ENCODE measurements at regions of chr3 and their contacts with region 1.

Region 1: DNA sequence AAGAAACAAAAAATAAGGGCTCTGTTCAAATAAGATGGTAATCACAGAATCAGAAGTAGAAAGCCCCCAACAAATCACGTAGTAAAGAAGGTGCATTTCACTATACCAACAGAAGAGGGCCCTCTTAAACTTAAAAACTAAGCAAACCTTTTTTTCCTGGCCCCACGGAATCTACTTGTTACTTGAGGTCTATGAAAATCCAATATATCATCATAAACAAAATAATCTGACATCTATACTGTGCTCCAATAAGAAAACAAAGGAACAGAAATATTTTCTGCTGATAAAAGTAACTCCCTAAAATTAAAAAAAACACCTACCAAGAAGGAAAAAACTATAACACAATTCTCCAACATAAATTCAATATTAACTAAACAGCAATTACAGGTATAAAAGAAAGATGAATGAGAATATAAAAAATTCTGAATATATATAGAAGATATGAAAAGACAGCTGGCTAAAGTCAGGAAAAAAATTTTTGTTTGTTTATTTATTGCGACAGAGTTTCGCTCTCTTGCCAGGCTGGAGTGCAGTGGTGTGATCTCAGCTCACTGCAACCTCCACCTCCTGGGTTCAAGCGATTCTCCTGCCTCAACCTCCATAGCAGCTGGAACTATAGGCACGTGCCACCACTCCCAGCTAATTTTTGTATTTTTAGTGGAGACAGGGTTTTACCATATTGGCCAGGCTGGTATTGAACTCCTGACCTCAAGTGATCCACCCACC is 81.8 kb downstream of the CLASP2 start:
- DNase-seq: no peak
- ATAC-seq: peak; percentile 62
- H3K4me3 ChIP-seq: no peak overlapping the region
- H3K27ac ChIP-seq: no peak overlapping the region
- H3K4me1 ChIP-seq: no peaks in the 10 kb centered on the region
- H3K27me3 ChIP-seq: no peaks in the 10 kb centered on the region
- CTCF ChIP-seq: peak; percentile 42 to 51 (median 50); a peak in 5 of 6 replicates
- EP300 ChIP-seq: no peak
- POLR2A ChIP-seq: no peak
- RAD21 ChIP-seq: peak; percentile 80

Region 2: GRCh38 chr3:32821686-32822296 is 814.5 kb before region 1 on chr3:
- CTCF ChIA-PET with region 1: no interaction called
- POLR2A ChIA-PET with region 1: no interaction called
- RAD21 ChIA-PET with region 1: no interaction called
- SMC1A ChIA-PET with region 1: no interaction called
- in situ Hi-C with region 1: no loop called
- intact Hi-C with region 1: no loop called
- DNase-seq: no peak
- ATAC-seq: no peak
- H3K4me3 ChIP-seq: no peak overlapping the region
- H3K27ac ChIP-seq: no peak overlapping the region
- H3K4me1 ChIP-seq: no peaks in the 10 kb centered on the region
- H3K27me3 ChIP-seq: peaks cover 13 to 19% of the 10 kb centered on the region in 2 experiments
- CTCF ChIP-seq: no peak
- EP300 ChIP-seq: no peak
- POLR2A ChIP-seq: no peak
- RAD21 ChIP-seq: no peak

Region 3: DNA sequence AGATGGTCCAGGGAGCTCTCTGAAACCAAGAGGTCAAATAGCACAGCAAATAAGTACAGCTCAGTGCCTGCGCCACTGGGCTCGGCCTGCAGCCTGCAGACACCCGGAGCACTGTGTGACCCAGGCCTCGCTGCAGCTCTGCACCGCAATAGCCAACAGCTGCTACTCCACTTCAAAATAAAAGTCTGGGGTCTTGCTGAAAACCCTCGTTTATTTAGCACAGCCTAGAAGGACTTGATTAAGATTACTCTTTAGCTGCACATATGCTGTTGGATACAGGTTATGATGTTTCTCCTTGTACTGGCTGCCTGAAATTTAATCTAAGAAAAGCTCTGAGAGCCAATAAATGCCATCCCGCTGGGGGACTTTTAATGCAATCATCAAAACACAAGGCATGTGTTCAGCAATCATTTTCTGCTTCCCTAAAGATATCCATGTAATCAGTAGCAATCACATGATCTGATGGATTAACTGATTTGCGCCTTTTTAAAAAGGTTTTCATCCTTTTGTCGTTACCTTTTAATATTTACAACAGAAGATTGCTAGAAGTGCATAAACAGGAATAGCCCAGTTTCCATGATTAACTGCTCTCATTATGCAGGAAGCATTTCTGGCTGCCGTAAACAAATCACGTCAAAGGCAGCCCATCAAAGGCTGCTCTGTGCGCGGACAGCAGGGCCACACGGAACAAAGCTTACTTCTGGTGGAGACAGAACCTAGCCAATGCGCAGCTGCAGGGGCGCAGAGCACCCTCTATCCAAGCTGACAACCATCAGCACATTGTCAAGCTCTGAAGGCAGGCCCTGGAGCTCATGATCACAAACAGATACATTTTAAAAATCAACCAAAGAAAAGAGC is 22.9 kb after region 1 on chr3:
- CTCF ChIA-PET with region 1: interaction called, 11 read pairs
- POLR2A ChIA-PET with region 1: no interaction called
- RAD21 ChIA-PET with region 1: no interaction called
- SMC1A ChIA-PET with region 1: interaction called, 11 read pairs
- in situ Hi-C with region 1: no loop called
- intact Hi-C with region 1: no loop called
- DNase-seq: peak; percentile 23
- ATAC-seq: peak; percentile 97
- H3K4me3 ChIP-seq: peak overlapping the region; percentile 66
- H3K27ac ChIP-seq: peak overlapping the region; percentile 48
- H3K4me1 ChIP-seq: peaks cover 4% of the 10 kb centered on the region; the same call in 1 of the 2 replicates
- H3K27me3 ChIP-seq: no peaks in the 10 kb centered on the region
- CTCF ChIP-seq: no peak
- EP300 ChIP-seq: no peak
- POLR2A ChIP-seq: peak; percentile 49
- RAD21 ChIP-seq: no peak

Region 4: GRCh38 chr3:33717866-33718594 is 81.7 kb after region 1 on chr3 and contains the start of gene CLASP2:
- CTCF ChIA-PET with region 1: interaction called, 21 read pairs
- POLR2A ChIA-PET with region 1: no interaction called
- RAD21 ChIA-PET with region 1: interaction called, 9 read pairs
- SMC1A ChIA-PET with region 1: interaction called, 16 read pairs
- in situ Hi-C with region 1: no loop called
- intact Hi-C with region 1: loop called (anchors 5 kb)
- DNase-seq: peak; percentile 42
- ATAC-seq: peak; percentile 91
- H3K4me3 ChIP-seq: peak within 1 kb of the TSS; percentile 77
- H3K27ac ChIP-seq: peak within 1 kb of the TSS; percentile 82
- H3K4me1 ChIP-seq: no peaks in the 10 kb centered on the region
- H3K27me3 ChIP-seq: no peaks in the 10 kb centered on the region
- CTCF ChIP-seq: no peak
- EP300 ChIP-seq: no peak
- POLR2A ChIP-seq: peak; percentile 89
- RAD21 ChIP-seq: no peak
- polyA plus RNA-seq, gene CLASP2: 4.0 to 5.3 TPM

Region 5: GRCh38 chr3:33773637-33774036 is 137.3 kb after region 1 on chr3:
- CTCF ChIA-PET with region 1: interaction called, 35 read pairs
- POLR2A ChIA-PET with region 1: no interaction called
- RAD21 ChIA-PET with region 1: interaction called, 25 read pairs
- SMC1A ChIA-PET with region 1: interaction called, 16 read pairs
- in situ Hi-C with region 1: no loop called
- intact Hi-C with region 1: loop called (anchors 1 kb)
- DNase-seq: no peak
- ATAC-seq: no peak
- H3K4me3 ChIP-seq: no peak overlapping the region
- H3K27ac ChIP-seq: no peak overlapping the region
- H3K4me1 ChIP-seq: no peaks in the 10 kb centered on the region
- H3K27me3 ChIP-seq: no peaks in the 10 kb centered on the region
- CTCF ChIP-seq: no peak
- EP300 ChIP-seq: no peak
- POLR2A ChIP-seq: no peak
- RAD21 ChIP-seq: no peak

Region 6: GRCh38 chr3:33821989-33822388 is 185.7 kb after region 1 on chr3:
- CTCF ChIA-PET with region 1: interaction called, 4 read pairs
- POLR2A ChIA-PET with region 1: interaction called, 11 read pairs
- RAD21 ChIA-PET with region 1: no interaction called
- SMC1A ChIA-PET with region 1: no interaction called
- in situ Hi-C with region 1: no loop called
- intact Hi-C with region 1: no loop called
- DNase-seq: no peak
- ATAC-seq: no peak
- H3K4me3 ChIP-seq: no peak overlapping the region
- H3K27ac ChIP-seq: no peak overlapping the region
- H3K4me1 ChIP-seq: no peaks in the 10 kb centered on the region
- H3K27me3 ChIP-seq: no peaks in the 10 kb centered on the region
- CTCF ChIP-seq: no peak
- EP300 ChIP-seq: no peak
- POLR2A ChIP-seq: no peak
- RAD21 ChIP-seq: no peak

Region 7: DNA sequence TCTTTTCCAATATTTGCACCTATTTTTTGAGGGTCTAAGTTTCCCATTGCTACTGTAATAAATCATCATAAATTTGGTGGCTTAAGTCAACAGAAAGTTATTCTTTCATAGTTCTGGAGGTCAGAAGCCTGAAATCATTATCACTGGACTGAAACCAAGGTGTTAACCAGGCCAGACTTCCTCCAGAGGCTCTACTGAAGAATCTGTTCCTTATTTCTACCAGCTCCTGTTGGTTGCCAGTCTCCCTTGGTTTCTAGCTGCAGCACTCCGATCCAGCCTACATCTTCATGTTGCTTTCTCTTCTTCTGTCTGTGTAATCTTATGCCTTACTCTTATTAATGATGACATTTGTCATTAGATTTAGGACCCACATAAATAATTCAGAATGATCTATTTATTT is 1981.1 kb after region 1 on chr3:
- CTCF ChIA-PET with region 1: no interaction called
- POLR2A ChIA-PET with region 1: no interaction called
- RAD21 ChIA-PET with region 1: no interaction called
- SMC1A ChIA-PET with region 1: no interaction called
- in situ Hi-C with region 1: no loop called
- intact Hi-C with region 1: no loop called
- DNase-seq: no peak
- ATAC-seq: peak; percentile 73
- H3K4me3 ChIP-seq: no peak overlapping the region
- H3K27ac ChIP-seq: no peak overlapping the region
- H3K4me1 ChIP-seq: no peaks in the 10 kb centered on the region
- H3K27me3 ChIP-seq: no peaks in the 10 kb centered on the region
- CTCF ChIP-seq: no peak
- EP300 ChIP-seq: no peak
- POLR2A ChIP-seq: no peak
- RAD21 ChIP-seq: no peak

Measured in GM12878 (cell line).